ENCODE measurements at regions of chr16 and their contacts with region 1.

Region 1: DNA sequence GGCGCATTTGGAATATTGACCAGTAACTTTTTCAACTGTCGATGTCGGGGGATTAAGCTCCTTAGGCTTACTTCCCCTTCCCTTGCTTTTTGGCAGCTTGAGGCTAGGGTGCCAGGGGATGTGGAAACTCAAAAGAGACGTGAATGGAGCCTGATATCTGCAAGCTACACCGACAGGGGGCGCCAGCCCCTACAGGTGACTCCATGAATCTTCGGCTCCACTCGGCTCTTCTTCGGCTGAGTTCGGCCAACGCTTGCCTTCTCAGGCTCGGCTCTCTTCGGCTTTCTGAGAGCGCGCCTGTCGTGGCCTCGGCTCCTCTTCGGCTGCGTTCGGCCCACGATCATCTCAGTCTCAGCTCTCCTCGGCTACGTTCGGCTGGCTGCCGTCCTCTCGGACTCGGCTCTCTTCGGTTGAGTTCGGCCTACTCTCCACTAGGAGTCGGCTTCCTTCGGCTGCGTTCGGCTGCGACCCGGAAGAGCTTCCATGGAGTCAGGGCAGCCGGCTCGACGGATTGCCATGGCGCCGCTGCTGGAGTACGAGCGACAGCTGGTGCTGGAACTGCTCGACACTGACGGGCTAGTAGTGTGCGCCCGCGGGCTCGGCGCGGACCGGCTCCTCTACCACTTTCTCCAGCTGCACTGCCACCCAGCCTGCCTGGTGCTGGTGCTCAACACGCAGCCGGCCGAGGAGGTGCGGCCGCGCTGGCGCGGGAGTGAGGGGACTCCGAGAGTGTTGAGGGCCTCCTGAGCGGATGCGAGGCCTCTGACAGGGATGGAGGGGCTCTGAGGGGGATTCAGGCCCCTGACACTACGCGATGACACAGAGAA is at the start of gene ERCC4:
- DNase-seq: peak; percentile 98
- H3K4me3 ChIP-seq: peak within 1 kb of the TSS; percentile 70 to 99 (median 87)
- H3K27ac ChIP-seq: peak within 1 kb of the TSS; percentile 60
- H3K4me1 ChIP-seq: peaks cover 8% of the 10 kb centered on the region
- H3K27me3 ChIP-seq: no peaks in the 10 kb centered on the region
- CTCF ChIP-seq: peak; percentile 94 to 97
- total RNA-seq, gene ERCC4: 9.7 to 13.1 TPM

Region 2: GRCh38 chr16:13866073-13866472 is 53.8 kb before region 1 on chr16:
- CTCF ChIA-PET with region 1: no interaction called
- dilution Hi-C with region 1: no loop called
- in situ Hi-C with region 1: no loop called
- intact Hi-C with region 1: loop called (anchors 1 kb)
- DNase-seq: peak; percentile 54
- H3K4me3 ChIP-seq: no peak overlapping the region
- H3K27ac ChIP-seq: no peak overlapping the region
- H3K4me1 ChIP-seq: no peaks in the 10 kb centered on the region
- H3K27me3 ChIP-seq: no peaks in the 10 kb centered on the region
- CTCF ChIP-seq: peak; percentile 68 to 69

Region 3: DNA sequence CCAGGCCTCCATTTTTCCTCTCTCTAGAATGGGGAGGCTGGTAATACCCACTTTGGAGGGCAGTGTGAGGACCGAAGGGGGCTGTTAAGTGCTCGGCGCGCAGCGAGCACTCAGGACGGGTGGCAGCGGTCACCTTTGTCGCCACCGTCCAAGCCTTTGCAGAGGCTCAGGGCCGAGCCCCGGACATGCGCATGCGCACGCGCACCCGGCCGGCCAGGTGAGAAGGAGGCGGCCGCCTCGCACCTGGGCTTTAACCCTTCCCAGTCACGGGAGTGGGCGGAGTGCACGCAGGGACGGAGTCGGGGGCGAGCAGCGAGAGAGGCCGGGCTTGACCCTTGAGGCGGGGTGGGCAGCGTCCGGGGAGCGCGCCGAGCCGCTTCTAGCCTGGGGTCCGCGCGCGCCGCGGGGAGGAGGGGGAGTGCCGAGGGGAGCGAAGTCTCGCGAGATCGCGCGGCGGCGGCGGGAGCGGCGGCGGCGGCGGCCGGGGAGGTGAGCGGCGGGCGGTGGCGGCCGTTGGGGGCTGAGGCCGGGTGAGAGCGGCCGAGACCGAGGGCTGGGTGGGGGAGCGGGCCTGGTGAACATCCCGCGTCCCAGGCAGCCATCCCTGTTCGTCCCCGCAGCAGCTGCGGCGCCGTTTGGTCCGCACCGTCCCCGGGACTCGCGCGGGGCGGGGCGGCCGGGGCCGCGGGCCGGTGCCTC is 151.1 kb after region 1 on chr16 and contains the start of gene MRTFB:
- CTCF ChIA-PET with region 1: no interaction called
- dilution Hi-C with region 1: no loop called
- in situ Hi-C with region 1: loop called in 1 of 2 experiments (anchors 10 kb)
- intact Hi-C with region 1: loop called (anchors 2 kb)
- DNase-seq: peak; percentile 78
- H3K4me3 ChIP-seq: peak within 1 kb of the TSS; percentile 73 to 94 (median 79)
- H3K27ac ChIP-seq: peak within 1 kb of the TSS; percentile 44
- H3K4me1 ChIP-seq: peaks cover 18% of the 10 kb centered on the region
- H3K27me3 ChIP-seq: no peaks in the 10 kb centered on the region
- CTCF ChIP-seq: no peak
- total RNA-seq, gene MRTFB: 22.8 to 33.8 TPM

Region 4: GRCh38 chr16:14244196-14245010 is 324.5 kb after region 1 on chr16:
- CTCF ChIA-PET with region 1: no interaction called
- dilution Hi-C with region 1: loop called (anchors 25 kb)
- in situ Hi-C with region 1: no loop called
- intact Hi-C with region 1: loop called (anchors 2 kb)
- DNase-seq: no peak
- H3K4me3 ChIP-seq: no peak overlapping the region
- H3K27ac ChIP-seq: no peak overlapping the region
- H3K4me1 ChIP-seq: no peaks in the 10 kb centered on the region
- H3K27me3 ChIP-seq: no peaks in the 10 kb centered on the region
- CTCF ChIP-seq: no peak

Region 5: DNA sequence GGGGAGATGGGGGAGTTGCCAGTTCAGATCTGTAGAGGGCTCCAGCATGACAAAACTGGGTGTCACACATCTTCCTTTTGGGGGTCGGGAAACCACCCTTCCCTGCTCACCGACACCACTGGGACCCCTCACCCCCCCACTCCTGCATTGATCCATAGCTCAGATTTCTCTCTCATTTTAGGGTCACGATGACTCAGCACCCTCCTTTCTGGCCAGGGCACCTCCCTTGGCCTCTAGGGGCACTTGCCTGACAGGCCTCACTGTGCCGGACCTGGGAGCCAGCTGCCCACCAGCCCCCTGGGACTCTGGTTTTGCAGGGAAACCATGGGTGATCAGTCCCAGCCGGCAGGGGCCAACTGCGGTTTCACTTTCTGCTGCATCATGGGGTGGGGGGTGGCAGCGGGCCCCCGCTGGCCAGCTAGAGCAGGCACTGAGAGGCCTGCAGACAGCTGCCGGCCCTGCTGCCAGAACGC is 390.7 kb after region 1 on chr16:
- CTCF ChIA-PET with region 1: interaction called, 18 read pairs
- dilution Hi-C with region 1: no loop called
- in situ Hi-C with region 1: no loop called
- intact Hi-C with region 1: no loop called
- DNase-seq: no peak
- H3K4me3 ChIP-seq: no peak overlapping the region
- H3K27ac ChIP-seq: peak overlapping the region; percentile 95
- H3K4me1 ChIP-seq: peaks cover 53% of the 10 kb centered on the region
- H3K27me3 ChIP-seq: no peaks in the 10 kb centered on the region
- CTCF ChIP-seq: peak in 1 of 2 donors; percentile 4

Region 6: DNA sequence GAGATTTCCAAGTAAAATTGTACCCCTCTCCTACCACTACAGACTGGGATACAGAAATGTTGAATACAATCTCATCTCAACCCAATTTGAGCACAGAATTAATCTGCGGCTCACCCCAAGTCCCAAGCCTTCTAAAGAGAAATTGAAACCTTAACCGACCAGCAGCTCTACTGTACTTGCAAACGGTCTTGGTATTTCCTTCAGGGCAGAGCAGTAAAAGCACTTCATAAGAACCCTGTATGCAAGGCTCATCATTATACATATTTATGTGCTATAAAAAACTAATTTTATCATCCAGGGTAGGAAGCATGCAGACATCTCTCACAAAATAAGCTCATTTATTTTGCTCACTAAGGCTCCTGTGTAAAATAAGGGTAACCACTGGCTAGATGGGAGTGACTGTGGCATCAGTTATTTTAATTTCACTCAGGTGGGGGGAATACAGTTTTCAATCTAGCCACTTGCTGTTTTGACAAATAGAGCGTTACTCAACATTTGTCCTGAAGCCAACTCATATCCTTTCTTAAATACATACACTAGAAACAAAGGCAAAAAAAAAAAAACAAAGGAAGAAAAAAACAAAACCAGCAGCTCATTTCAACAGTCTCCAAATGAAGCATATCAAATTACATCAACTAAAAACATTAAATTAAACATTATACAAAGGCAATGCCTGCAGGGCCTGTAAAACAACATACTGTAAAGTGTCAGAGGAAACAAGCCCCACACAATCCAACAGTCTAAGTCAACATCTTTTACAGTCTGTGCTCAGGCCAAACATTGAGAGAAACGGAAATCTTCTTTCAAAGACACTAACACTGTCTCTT is 645.2 kb after region 1 on chr16:
- CTCF ChIA-PET with region 1: interaction called, 11 read pairs
- dilution Hi-C with region 1: no loop called
- in situ Hi-C with region 1: no loop called
- intact Hi-C with region 1: no loop called
- DNase-seq: peak; percentile 43
- H3K4me3 ChIP-seq: no peak overlapping the region
- H3K27ac ChIP-seq: no peak overlapping the region
- H3K4me1 ChIP-seq: peaks cover 39% of the 10 kb centered on the region
- H3K27me3 ChIP-seq: no peaks in the 10 kb centered on the region
- CTCF ChIP-seq: no peak

Measured in mammary epithelial cell (primary cell).